ENCODE measurements at regions of chr17 and their contacts with region 1.

Region 1: DNA sequence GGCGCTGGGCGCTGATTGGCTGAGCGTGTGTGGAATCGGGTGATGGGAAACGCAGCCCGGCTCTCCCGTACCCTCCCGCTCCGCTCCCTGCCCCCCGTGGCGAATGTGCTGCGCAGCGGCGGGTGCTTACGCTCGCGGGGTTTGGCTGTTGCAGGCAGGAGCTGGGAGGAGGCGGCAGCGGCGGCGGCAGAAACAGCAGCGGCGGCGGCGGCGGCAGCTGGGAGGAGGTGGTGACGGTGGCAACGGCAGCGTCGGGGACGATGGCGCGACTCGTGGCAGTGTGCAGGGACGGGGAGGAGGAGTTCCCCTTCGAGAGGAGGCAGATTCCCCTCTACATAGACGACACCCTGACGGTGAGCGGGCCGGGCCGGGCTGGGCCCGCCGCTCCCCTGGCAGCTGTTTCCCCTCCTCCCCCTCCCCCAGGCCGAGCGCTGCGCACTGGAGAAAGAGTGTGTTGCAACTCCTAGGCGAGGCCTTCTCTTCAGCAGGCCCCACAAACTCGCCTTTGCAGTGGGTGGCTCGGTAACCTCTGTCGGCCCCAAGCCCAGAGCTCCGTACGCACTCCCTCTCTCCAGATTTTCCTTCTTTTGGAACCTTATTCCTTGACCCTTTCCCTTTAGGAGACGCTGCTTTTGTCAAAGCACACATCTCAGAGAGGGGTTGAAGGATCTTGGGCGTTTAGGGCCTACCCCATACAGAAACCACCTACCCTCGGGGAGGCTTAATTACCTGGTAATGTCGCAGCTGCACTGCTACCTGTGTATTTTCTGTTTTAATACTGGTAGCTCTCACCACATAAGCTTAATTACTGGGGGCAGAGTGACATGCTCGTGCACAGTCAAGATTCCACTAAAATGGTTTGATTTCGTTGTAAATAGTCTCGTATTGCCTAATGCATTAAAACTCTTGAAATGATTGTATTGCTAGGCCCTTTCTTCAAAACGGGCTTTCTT is 1.0 kb downstream of the GGNBP2 start:
- DNase-seq: peak; percentile 84

Region 2: DNA sequence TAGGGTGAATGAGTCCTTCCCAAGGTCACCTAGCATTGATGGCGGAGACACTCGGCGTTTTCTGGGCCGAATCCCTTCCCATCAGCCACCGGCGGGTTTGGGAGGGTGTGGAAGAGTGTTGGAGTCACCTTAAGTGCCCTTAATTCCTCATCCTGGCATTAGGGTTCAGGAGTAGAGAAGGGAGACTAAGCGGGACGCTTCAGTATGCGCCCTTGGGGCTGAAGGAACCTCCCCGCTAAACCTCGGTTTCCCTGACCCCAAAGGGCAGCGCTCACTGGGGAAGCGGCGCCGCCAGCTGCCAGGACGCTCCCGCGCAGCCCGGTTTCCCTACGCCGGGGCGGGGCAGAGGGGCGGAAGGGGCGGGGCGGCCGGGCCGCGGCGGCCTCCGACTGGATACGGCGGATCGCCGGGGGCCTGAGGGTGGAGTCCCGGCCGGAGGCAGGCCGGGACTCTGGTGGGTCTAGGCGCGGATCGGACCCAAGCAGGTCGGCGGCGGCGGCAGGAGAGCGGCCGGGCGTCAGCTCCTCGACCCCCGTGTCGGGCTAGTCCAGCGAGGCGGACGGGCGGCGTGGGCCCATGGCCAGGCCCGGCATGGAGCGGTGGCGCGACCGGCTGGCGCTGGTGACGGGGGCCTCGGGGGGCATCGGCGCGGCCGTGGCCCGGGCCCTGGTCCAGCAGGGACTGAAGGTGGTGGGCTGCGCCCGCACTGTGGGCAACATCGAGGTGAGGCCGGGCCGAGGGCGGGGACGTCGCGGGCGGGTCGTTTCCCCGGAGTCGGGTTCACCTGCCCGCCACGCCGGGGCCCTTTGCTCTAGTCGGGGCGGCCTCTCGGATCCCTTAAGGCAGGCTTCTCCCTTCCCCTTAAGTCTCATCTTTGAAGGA is 45.9 kb after region 1 on chr17 and contains the start of gene DHRS11:
- CTCF ChIA-PET with region 1: no interaction called
- POLR2A ChIA-PET with region 1: interaction called, 16 read pairs
- DNase-seq: peak; percentile 84